Cardiac septum (tissue), 1 donor: ENCODE measurements at regions of chr19 and their contacts with region 1.

Region 1: GRCh38 chr19:39341719-39342604 is at the start of gene SAMD4B:
- DNase-seq: peak; percentile 100
- total RNA-seq, gene SAMD4B: 65.8 TPM

Region 2: DNA sequence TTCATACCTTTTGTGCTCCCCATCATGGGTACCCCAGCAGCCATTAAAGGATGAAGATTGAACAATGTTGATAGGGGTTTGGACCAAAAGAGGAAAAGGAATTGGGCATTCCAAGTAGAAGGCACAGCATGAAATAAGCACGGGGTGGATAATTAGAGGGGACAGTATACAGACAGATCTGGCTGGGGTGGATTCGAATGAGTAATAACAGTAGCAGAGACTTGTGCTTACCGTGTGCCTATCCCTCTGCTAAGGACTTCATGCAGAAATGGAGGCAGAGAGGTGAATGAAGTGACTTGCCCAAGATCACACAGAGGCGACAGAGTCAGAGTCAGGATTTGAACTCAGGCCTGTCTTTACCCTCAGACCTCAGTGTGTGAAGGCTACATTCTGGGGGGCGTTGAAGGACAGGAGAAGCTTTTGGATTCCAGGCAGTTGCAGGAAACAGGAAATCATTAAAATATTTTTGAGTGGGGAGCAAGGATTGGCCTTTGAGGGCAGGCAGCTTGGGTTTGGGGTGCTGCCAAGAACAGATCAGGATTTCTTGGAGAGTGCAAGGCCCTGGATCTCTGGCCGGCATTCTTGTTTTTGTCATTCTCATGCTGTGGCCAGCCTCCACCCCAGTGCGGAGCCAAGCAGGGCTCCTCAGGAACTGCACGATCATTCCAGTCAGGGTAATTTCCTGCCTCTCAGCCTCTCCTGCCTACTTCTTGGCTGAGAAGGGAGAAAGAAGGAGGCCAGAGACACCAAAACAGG is 30.3 kb after region 1 on chr19:
- intact Hi-C with region 1: loop called (anchors 1 kb)
- DNase-seq: peak; percentile 80

Region 3: DNA sequence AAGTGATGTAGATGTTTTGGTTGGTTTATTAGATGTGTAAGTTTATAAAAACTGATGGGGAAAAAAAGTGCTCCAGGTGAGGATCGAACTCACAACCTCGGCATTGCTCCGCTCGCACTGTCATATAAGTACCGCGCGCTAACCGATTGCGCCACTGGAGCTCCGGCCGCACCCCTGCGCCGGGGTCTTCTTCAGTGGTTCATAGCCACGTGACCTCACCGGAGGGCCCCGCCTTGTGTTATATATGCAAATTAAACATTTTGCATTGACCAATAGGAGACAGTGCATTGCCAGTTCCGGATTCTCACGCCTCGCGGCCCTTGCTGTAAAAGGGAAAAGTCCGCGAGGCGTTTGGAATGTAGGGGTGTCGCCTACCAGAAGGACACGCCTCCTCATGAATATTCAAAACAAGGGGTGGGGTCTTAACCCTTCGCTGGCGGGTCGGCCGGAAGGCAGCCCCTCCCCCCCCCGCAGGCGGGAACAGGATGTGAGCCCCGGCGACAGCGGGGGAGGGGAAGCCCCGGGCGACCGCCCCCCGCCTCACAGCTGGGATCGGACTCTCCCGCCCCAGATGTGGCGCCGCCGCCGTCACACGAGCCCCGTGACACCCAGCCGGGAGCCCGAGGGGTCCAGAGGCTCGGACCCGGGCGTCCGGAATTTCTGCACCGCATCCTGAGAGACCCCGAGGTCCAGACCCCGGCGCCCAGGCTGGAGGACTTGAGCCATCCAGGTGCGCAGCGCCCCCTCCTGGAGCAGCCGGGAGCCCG is 70.3 kb after region 1 on chr19 and contains the start of gene PLEKHG2:
- intact Hi-C with region 1: loop called (anchors 5 kb)
- DNase-seq: peak; percentile 97
- total RNA-seq, gene PLEKHG2: 25.1 TPM